Activated naive CD4-positive, alpha-beta T cell treated with anti-CD3 and anti-CD28 coated beads, Interleukin-2, amount 10 ng/mL, durations not matched to agents 7 days and 5 days (primary cell): ENCODE measurements at regions of chr14 and their contacts with region 1.

Region 1: GRCh38 chr14:76784266-76785264 is 23.3 kb downstream of the VASH1 start:
- DNase-seq: peak; percentile 72
- H3K4me3 Mint-ChIP-seq: no peak overlapping the region
- H3K27ac Mint-ChIP-seq: peak overlapping the region; percentile 11
- H3K4me1 Mint-ChIP-seq: peaks cover 26% of the 10 kb centered on the region
- H3K27me3 Mint-ChIP-seq: no peaks in the 10 kb centered on the region

Region 2: DNA sequence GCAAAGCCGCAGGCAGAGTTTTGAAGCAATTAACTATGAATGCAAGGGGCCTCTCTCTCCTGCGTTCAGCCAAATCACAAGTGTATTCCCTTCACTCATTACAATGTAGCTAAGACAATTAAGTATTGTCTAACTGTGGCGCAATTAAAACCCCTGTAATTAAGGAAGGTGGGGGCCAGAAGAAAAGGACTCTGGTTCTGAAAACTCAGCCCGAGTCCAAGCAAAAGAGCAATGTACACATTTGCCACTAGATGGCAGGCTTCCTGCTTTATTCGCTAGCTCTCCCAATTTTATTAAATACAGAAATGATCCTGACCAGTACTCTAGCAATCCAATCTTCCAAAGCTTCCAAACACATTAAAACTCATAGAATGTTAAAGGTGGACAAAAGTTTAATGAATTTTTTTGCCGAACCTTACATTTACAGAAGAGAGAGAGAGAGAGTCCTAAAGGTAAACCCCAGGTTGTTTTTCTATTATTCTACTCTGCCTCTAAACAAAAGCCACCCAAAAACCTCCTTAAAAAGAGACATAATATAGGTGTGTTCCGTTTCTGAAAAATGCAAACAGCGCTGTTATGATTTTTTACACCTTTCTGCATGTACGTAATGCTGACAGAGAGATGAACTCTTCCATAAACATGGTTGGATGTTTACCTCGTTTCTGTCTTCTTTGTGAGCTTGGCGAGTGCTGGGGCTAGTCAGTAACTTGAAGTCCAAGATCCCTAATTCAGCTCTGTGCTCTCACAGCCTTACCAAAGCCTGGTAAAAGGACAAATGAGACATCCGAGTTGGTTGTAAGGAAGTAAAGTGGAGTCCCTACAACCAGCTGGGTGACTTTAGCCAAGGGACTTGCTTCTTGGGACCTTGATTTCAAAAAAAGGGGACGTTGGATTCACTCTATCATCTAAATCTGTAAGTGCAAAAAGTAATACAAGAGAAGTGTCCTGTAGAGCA is 74.2 kb before region 1 on chr14:
- CTCF ChIA-PET with region 1: interaction called, 127 read pairs
- DNase-seq: peak; percentile 44
- H3K4me3 Mint-ChIP-seq: no peak overlapping the region
- H3K27ac Mint-ChIP-seq: peak overlapping the region; percentile 58
- H3K4me1 Mint-ChIP-seq: no peaks in the 10 kb centered on the region
- H3K27me3 Mint-ChIP-seq: peaks cover 14% of the 10 kb centered on the region

Region 3: GRCh38 chr14:76761136-76761959 is 23.2 kb before region 1 on chr14 and contains the start of gene VASH1:
- CTCF ChIA-PET with region 1: interaction called, 20 read pairs
- DNase-seq: peak; percentile 72
- H3K4me3 Mint-ChIP-seq: peak within 1 kb of the TSS; percentile 78
- H3K27ac Mint-ChIP-seq: no peak within 1 kb of the TSS
- H3K4me1 Mint-ChIP-seq: peaks cover 14% of the 10 kb centered on the region
- H3K27me3 Mint-ChIP-seq: peaks cover 87% of the 10 kb centered on the region

Region 4: GRCh38 chr14:76767681-76768656 is 16.6 kb before region 1 on chr14:
- CTCF ChIA-PET with region 1: interaction called, 26 read pairs
- DNase-seq: peak; percentile 82
- H3K4me3 Mint-ChIP-seq: peak overlapping the region; percentile 14
- H3K27ac Mint-ChIP-seq: peak overlapping the region; percentile 54
- H3K4me1 Mint-ChIP-seq: peaks cover 25% of the 10 kb centered on the region
- H3K27me3 Mint-ChIP-seq: peaks cover 73% of the 10 kb centered on the region

Region 5: DNA sequence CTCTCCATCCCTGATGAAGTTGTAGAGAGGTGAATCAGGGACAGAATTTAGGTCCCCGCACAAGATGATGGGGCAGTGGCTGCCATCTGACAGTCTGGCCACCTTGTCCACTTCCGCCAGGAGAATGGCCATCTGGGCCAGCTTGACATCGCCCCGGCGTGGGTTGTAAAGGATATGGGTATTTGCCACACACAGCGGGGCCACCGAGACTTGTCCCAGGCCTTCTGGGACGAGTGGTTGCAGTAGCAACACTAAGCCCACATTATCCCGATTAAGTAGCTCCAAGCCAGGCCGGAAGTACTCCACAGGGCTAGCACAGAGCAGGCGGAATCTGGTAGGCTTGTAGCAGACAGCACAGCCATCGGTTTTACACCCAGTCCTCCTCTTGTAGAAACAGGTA is 21.9 kb after region 1 on chr14:
- CTCF ChIA-PET with region 1: interaction called, 37 read pairs
- DNase-seq: no peak
- H3K4me3 Mint-ChIP-seq: no peak overlapping the region
- H3K27ac Mint-ChIP-seq: no peak overlapping the region
- H3K4me1 Mint-ChIP-seq: peaks cover 11% of the 10 kb centered on the region
- H3K27me3 Mint-ChIP-seq: no peaks in the 10 kb centered on the region

Region 6: DNA sequence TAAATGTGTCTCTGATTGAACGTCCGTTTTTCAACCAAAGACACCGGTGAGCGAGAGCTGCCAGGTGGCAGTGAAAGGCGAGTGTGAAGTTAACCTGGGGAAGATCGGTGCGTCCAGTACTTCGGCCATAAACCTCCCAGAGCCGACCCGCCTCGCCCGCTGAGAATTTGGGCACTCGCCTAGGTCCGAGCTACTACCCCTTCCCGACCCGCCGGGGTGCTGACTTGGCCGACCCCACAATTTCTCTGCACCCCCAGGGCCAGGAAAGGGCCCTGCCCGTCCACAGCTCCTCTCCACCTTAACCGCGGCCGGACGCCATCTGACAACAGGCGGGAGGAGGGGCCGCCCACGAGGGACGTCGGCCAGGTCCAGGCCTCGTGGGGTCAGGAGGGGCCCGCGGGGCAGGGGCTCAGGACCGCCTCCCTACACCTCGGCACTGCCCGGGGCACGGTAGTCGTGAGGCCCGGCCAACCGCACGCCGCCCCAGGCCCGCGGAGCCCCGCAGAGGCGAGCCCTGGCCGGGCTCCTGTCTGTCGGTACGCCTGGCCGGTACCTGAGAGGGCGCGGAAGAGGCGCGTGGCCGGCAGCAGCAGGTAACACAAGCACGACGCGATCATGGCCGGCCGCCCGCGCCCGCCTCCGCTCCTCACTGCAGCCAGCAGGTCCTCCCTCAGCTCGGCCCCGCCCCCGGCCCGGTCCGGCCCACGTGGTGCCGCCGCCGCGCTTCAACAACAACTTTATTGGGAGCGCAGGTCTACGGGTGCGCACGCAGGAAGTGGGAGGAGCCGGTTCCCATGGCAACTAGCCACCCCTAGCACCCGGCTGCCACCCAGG is 27.9 kb after region 1 on chr14 and contains the start of gene ANGEL1:
- CTCF ChIA-PET with region 1: interaction called, 37 read pairs
- DNase-seq: peak; percentile 98
- H3K4me3 Mint-ChIP-seq: peak within 1 kb of the TSS; percentile 90
- H3K27ac Mint-ChIP-seq: peak within 1 kb of the TSS; percentile 81
- H3K4me1 Mint-ChIP-seq: peaks cover 21% of the 10 kb centered on the region
- H3K27me3 Mint-ChIP-seq: no peaks in the 10 kb centered on the region